ENCODE measurements at regions of chr19 and their contacts with region 1.

Region 1: GRCh38 chr19:7224209-7224686 is 70.0 kb downstream of the INSR start:
- DNase-seq: no peak
- H3K4me3 ChIP-seq: no peak overlapping the region
- H3K27me3 ChIP-seq: no peaks in the 10 kb centered on the region
- CTCF ChIP-seq: no peak

Region 2: GRCh38 chr19:6737284-6738046 is 486.8 kb before region 1 on chr19 and contains the start of gene GPR108:
- CTCF ChIA-PET with region 1: no interaction called
- POLR2A ChIA-PET with region 1: no interaction called
- DNase-seq: peak; percentile 100
- H3K4me3 ChIP-seq: peak within 1 kb of the TSS; percentile 84
- H3K27me3 ChIP-seq: no peaks in the 10 kb centered on the region
- CTCF ChIP-seq: no peak
- polyA plus RNA-seq, gene GPR108: 56.1 and 71.4 TPM in 2 replicates

Region 3: DNA sequence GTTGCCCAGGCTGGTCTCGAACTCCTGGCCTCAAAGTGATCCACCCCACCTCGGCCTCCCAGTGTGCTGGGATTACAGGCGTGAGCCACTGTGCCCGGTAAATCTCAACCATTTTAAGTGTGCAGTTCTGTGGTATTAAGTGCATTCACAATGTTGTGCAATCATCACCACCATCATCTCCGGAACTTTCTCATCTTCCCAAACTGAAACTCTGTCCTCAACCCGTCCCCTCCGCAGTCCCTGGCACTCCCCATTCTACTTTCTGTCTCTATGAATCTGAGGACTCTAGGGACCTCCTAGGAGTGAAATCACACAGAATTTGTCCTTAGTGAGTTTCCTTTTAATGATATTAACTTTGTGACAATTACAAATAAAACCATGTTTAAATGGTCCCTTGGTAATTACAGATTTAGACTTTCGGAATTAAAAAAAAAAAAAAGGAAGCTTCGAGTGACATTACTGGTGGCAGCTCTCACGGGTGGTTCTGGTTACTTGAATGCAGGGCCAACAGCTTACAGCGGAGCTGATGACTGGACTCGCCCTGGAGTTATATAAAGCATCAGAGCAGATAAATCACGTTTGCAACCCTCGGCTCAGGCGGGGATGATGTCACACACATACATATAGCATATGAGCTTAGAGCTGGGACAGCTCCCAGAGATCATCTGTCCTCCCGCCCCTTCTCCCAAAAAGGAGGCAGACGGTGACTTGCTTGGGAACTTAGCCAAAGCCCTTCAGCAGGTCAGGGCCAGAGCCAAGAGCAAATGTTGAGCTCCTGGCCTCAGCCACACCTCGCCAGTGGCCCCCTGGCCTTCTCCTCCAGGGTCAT is 64.9 kb before region 1 on chr19:
- CTCF ChIA-PET with region 1: no interaction called
- POLR2A ChIA-PET with region 1: no interaction called
- DNase-seq: no peak
- H3K4me3 ChIP-seq: no peak overlapping the region
- H3K27me3 ChIP-seq: no peaks in the 10 kb centered on the region
- CTCF ChIP-seq: no peak

Region 4: DNA sequence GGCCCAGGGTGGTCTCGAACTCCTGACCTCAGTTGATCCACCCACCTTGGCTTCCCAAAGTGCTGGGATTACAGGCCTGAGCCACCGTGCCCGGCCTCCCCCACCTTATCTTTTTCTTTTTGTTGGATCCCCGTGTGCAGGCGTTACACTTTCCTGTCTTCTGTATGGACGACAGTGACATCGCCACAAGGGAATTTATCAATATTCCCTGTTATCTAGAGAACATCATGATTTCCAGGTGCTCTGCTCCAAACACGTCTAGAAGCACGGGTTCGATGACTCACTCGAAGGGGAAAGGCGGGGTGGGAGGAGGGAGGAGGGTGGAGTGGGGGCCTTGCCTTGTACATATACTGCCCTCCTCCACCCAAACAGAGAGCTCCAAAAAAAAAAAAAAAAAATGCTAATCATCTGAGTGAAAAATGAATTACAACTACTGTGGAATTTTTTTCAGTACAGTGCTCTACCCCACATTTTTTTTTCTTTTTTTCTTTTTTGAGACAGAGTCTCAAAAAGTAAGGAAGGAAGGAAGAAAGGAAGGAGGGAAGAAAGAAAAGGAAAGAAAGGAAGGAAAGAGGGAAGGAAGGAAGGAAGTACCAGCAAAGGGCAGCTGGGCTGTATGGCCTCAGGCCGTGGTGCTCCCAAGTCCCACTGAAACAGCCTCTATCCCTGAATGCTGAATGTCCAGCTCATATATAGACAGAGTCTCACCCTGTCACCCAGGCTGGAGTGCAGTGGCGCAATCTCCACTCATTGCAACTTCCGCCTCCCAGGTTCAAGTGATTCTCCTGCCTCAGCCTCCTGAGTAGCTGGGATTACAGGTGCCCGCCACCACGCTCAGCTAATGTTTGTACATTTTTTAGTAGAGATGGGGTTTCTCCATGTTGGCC is 33.1 kb after region 1 on chr19:
- CTCF ChIA-PET with region 1: no interaction called
- POLR2A ChIA-PET with region 1: no interaction called
- DNase-seq: no peak
- H3K4me3 ChIP-seq: no peak overlapping the region
- H3K27me3 ChIP-seq: no peaks in the 10 kb centered on the region
- CTCF ChIP-seq: no peak

Region 5: DNA sequence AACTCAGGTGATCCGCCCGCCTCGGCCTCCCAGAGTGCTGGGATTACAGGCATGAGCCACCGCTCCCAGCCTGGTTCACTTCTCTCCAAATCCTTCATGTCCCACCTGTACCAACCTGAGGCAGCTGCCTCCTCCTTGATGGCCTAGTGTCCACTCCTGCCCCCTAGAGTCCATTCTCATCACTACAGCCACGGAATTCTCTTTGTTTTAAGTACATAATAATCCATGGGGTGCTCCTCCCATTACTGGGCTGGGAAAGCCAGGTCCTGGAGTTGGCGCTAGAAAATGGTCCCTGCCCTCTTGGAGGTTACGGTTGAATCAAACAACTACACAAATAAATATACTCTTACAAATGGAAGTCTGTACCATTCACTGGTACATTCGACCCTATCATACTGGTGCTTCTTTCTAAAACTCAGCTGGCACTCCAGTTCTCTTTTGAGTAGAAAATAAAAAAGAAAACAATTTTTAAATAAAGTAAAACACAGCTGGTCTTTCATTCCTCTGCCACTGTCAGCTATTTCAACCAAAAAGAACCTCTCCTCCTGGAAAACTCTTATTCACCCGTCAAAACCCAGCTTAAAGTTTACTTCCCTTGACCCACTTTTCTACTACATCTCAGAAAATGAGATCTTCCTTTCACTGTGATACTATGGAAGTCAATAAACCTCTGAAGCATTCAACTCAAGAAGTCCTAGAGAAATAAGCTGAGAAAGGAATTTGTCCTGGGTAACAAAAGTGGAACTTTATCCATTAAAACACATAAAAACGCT is 102.0 kb after region 1 on chr19:
- CTCF ChIA-PET with region 1: no interaction called
- POLR2A ChIA-PET with region 1: interaction called, 10 read pairs
- DNase-seq: no peak
- H3K4me3 ChIP-seq: no peak overlapping the region
- H3K27me3 ChIP-seq: no peaks in the 10 kb centered on the region
- CTCF ChIP-seq: peak; percentile 33

Measured in BJ (cell line).